ENCODE measurements at regions of chr4 and their contacts with region 1.

Region 1: GRCh38 chr4:155509555-155509954 is 132.8 kb upstream of the MAP9 start:
- DNase-seq: no peak
- ATAC-seq: no peak
- H3K4me3 Mint-ChIP-seq: no peak overlapping the region
- H3K27ac Mint-ChIP-seq: no peak overlapping the region
- H3K4me1 Mint-ChIP-seq: peaks cover 20% of the 10 kb centered on the region
- H3K27me3 Mint-ChIP-seq: no peaks in the 10 kb centered on the region
- CTCF ChIP-seq: no peak

Region 2: GRCh38 chr4:155473420-155474095 is 36.0 kb before region 1 on chr4:
- CTCF ChIA-PET with region 1: no interaction called
- POLR2A ChIA-PET with region 1: no interaction called
- DNase-seq: no peak
- ATAC-seq: no peak; the same call in 1 of the 2 replicates
- H3K4me3 Mint-ChIP-seq: no peak overlapping the region
- H3K27ac Mint-ChIP-seq: no peak overlapping the region
- H3K4me1 Mint-ChIP-seq: no peaks in the 10 kb centered on the region
- H3K27me3 Mint-ChIP-seq: peaks cover 8% of the 10 kb centered on the region
- CTCF ChIP-seq: no peak

Region 3: DNA sequence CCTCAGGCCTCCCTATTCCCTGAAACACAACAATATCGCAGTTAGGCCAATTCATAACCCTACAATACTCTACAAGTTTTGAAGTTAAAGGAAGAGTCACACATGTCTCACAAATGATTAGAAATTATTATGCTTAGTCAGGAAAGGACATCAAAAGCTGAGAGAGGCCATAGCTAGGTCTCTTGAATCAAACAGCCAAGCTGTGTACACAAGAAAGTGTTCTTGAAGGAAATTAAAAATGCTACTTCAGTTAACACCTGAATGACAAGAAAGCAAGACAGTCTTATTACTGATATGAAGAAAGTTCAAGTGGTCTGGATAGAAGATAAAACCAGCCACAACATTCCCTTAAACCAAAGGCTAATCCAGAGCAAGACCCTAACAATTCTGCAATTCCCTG is 133.5 kb after region 1 on chr4:
- CTCF ChIA-PET with region 1: interaction called, 10 read pairs
- POLR2A ChIA-PET with region 1: no interaction called
- DNase-seq: no peak
- ATAC-seq: no peak
- H3K4me3 Mint-ChIP-seq: no peak overlapping the region
- H3K27ac Mint-ChIP-seq: no peak overlapping the region
- H3K4me1 Mint-ChIP-seq: no peaks in the 10 kb centered on the region
- H3K27me3 Mint-ChIP-seq: no peaks in the 10 kb centered on the region
- CTCF ChIP-seq: no peak

Measured in WTC11 (cell line).